ENCODE measurements at regions of chr2 and their contacts with region 1.

Region 1: GRCh38 chr2:26144953-26145680 is 27.8 kb upstream of the GAREM2 start:
- DNase-seq: peak in 4 of 5 donors; percentile 61 to 77 (median 70)
- H3K4me3 ChIP-seq: no peak overlapping the region
- H3K27ac ChIP-seq: no peak overlapping the region
- H3K4me1 ChIP-seq: no peaks in the 10 kb centered on the region
- H3K27me3 ChIP-seq: no peaks in the 10 kb centered on the region
- CTCF ChIP-seq: peak; percentile 86

Region 2: GRCh38 chr2:25632396-25632795 is 512.7 kb before region 1 on chr2:
- intact Hi-C with region 1: no loop called
- DNase-seq: no peak
- H3K4me3 ChIP-seq: no peak overlapping the region
- H3K27ac ChIP-seq: no peak overlapping the region
- H3K4me1 ChIP-seq: no peaks in the 10 kb centered on the region
- H3K27me3 ChIP-seq: no peaks in the 10 kb centered on the region
- CTCF ChIP-seq: no peak

Region 3: GRCh38 chr2:25991965-25992364 is 153.2 kb before region 1 on chr2:
- intact Hi-C with region 1: loop called (anchors 5 kb)
- DNase-seq: no peak
- H3K4me3 ChIP-seq: peak overlapping the region in 2 of 3 donors; percentile 53 to 68
- H3K27ac ChIP-seq: no peak overlapping the region
- H3K4me1 ChIP-seq: no peaks in the 10 kb centered on the region
- H3K27me3 ChIP-seq: no peaks in the 10 kb centered on the region
- CTCF ChIP-seq: no peak

Measured in kidney (tissue), 22 donors.